ENCODE measurements at regions of chr3 and their contacts with region 1.

Region 1: DNA sequence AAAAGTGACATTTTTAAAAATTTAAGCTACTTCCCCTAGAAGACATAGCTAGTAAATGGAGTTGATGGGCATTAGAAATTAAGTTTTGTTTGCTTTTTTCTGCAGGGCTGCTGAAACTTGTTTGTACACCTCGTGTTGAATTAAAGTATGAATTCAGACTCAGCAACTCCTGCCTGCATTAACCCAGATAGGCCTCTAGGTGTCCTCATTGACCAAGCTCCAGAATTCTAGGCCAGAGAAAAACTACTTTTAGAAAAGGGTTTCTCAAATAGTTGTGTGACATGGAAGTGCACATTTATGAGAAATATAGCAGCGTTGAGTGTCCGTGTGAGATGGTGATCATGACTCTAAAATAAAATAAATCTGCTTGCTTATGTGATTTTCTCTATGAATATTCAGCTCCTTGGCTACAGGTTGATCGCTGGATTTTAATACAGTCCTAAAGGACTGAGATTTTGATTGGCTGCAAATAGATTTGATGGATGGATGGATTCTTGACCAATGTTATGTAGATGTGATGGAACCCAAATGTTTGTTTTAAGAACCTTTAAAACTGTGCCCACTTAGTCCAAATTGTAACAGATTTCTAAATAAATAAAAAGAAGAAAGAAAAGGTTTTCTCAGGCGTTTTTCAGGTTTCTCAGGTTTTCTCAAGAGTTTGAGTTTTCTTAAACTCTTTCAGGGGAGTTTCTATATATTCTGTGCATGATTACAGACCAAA is 39.4 kb upstream of the LMOD3 start:
- DNase-seq: peak in 1 of 2 donors; percentile 69
- H3K4me3 ChIP-seq: no peak overlapping the region
- H3K27ac ChIP-seq: no peak overlapping the region
- H3K4me1 ChIP-seq: no peaks in the 10 kb centered on the region
- H3K27me3 ChIP-seq: no peaks in the 10 kb centered on the region
- CTCF ChIP-seq: peak; percentile 91 to 92 (median 92)

Region 2: DNA sequence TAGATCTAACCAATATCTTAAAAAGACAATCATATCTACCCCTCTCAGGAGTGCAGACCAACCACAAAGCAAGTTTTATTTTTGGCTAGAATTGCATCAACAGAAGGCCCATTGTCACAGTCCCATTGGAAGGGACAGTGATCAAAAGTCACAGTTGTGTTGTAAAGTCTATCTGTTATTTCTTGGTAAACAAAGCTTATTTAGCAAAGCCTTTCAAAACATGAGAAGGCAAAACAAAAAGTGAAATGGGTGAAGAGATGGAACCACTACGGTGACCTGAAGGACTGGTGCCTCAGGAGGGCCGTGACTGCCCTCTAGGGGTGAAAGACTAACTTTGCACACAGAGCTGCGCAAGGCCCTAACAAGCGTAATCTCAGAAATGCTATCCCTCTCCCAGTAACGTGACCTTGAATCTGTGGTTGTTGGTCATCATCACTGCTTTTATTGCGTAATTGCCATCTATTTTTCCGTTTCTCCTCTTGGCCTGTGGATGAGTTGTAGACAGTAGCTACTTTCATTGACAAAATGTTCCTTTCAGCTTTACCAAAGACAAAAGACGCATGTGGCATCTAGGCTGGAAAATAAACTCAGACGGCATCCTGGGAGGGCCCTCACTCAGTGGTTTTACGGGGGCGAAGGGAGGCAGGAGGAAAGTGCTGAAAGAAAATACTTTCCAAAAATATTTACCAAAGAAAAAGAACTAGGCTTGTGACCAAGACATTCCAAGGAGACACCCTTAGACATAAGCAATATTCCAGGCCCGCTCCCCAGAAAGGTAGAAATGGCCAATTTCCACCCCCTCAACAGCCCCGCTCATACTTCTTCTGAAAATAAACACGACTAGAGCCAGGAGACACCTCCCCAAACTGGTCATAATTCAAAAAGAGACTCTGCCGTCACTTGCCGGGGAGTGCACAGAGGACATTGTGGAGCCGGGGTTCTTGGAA is 144.8 kb after region 1 on chr3:
- intact Hi-C with region 1: loop called (anchors 1 kb)
- DNase-seq: peak; percentile 35 to 82
- H3K4me3 ChIP-seq: peak overlapping the region in 1 of 2 donors; percentile 3
- H3K27ac ChIP-seq: peak overlapping the region; percentile 64 to 73
- H3K4me1 ChIP-seq: peaks cover 0 to 7% of the 10 kb centered on the region in 2 donors
- H3K27me3 ChIP-seq: no peaks in the 10 kb centered on the region
- CTCF ChIP-seq: peak; percentile 87 to 92 (median 88)

Region 3: GRCh38 chr3:69426967-69427304 is 265.2 kb after region 1 on chr3:
- intact Hi-C with region 1: loop called (anchors 1 kb)
- DNase-seq: no peak
- H3K4me3 ChIP-seq: no peak overlapping the region
- H3K27ac ChIP-seq: no peak overlapping the region
- H3K4me1 ChIP-seq: no peaks in the 10 kb centered on the region
- H3K27me3 ChIP-seq: no peaks in the 10 kb centered on the region
- CTCF ChIP-seq: peak in 2 of 3 experiments; percentile 16 to 22

Region 4: GRCh38 chr3:69671082-69671952 is 509.6 kb after region 1 on chr3:
- intact Hi-C with region 1: loop called (anchors 2 kb)
- DNase-seq: no peak
- H3K4me3 ChIP-seq: no peak overlapping the region
- H3K27ac ChIP-seq: no peak overlapping the region
- H3K4me1 ChIP-seq: no peaks in the 10 kb centered on the region
- H3K27me3 ChIP-seq: no peaks in the 10 kb centered on the region
- CTCF ChIP-seq: peak; percentile 67 to 74 (median 70)

Region 5: DNA sequence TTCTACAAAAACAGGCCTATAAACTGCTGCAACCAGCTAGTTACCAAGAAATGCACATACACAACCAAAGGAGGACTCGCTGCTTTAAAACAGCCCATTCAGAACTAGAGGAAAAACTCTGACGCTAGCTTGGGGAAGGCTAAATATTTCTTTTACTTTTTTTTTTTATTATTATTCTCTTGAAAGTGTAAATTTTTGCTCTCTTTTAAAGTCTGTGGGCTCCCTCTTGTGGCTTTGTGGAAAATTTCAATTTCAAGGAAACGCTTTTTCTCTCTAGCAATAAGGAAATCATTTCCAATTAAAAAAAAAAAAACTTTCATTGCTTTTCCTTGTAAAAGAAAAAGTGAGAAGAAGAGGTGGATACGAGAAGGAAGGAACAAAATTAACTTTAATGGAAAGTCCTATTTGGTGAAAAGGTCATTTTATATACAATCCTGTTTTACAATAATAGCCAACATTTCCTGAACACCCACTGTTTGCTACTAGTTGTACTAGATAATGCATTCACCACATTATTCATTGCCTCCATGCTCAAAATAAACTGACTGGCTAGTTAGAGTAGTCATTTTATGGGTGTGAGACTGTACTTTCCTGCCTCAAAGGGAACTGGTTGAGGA is 786.6 kb after region 1 on chr3:
- intact Hi-C with region 1: loop called (anchors 10 kb)
- DNase-seq: no peak
- H3K4me3 ChIP-seq: no peak overlapping the region
- H3K27ac ChIP-seq: peak overlapping the region; percentile 24 to 32
- H3K4me1 ChIP-seq: peaks cover 0 to 4% of the 10 kb centered on the region in 2 donors
- H3K27me3 ChIP-seq: no peaks in the 10 kb centered on the region
- CTCF ChIP-seq: peak; percentile 38 to 79 (median 66)